ENCODE measurements at regions of chr1 and their contacts with region 1.

Region 1: DNA sequence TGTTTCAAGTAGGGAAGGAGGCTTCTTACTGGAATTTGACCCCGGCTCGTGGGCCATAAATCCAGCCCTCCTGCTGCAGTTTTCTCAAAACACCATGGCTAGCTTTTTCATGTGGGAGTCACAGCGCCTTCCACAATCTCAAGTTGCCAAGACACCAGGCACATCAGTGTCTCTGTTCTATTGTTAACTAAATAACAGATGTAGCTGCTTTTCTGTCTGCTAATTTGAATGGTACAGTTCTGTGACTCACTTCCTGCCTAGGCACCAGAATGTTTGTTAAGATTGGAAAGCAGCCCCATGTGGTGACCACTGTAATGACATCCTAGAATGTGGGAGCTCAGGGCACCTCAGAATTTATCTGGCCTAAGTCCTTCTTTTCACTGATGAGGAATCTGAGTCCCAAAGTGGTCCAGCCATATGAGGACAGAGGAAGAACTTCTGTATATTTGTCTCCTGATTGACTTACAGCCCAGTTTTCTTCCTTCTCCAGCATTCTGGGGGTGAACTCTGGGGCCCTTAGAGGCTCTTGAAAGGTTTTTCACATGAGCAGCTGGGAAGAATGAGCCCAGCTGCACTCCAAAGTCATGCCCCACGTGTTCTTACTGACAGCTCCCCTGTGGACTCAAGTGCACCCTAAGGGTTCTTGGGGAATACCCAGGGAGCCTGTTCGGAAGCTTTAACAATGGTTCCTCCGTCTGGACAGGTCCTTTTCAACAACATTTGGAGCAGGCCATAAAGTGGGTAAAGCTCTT is 27.5 kb downstream of the TRIM45 start:
- DNase-seq: no peak
- ATAC-seq: peak; percentile 66 to 82 (median 76)
- H3K4me3 ChIP-seq: no peak overlapping the region
- H3K27ac ChIP-seq: peak overlapping the region; percentile 98
- H3K4me1 ChIP-seq: peaks cover 54% of the 10 kb centered on the region
- H3K27me3 ChIP-seq: no peaks in the 10 kb centered on the region
- CTCF ChIP-seq: peak; percentile 39

Region 2: DNA sequence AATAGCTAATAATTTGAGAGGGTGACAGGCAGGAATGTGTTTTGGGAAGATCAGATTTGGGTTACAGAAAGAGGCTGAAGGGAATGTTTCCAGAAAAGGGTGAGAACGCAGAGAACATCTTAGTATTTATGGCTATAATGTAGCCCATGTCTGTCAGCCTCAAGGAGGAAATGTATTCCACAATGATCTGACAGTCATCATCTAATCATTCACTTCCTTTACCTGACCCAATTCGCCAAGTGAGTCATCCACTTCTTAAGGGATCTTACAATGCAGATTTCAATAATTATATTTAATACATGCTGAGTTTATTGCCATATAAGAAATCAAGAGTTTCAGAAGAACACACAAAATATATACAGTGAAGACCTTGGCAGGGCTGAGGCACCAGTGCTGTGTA is 16.7 kb after region 1 on chr1:
- intact Hi-C with region 1: loop called in 1 of 2 experiments (anchors 2 kb)
- DNase-seq: no peak
- ATAC-seq: peak in 1 of 4 donors; percentile 59
- H3K4me3 ChIP-seq: no peak overlapping the region
- H3K27ac ChIP-seq: peak overlapping the region; percentile 54
- H3K4me1 ChIP-seq: peaks cover 3% of the 10 kb centered on the region
- H3K27me3 ChIP-seq: no peaks in the 10 kb centered on the region
- CTCF ChIP-seq: no peak

Region 3: DNA sequence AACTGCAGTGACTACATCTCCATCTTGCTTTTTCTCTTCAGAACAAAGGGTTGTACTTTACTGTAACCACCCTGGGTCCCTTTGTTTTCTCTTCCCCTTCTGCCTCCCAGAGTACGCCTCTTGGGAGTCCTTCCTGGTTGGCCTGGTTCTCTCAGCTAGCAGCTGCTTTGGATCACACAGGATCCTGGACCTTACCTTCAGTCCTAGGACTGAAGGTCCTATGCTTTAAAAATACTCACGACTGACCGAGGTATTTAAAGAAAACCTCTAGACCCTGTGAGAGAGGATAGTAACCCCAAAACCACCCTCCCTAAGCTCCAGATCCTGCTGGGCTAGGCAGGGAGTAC is 22.7 kb after region 1 on chr1:
- intact Hi-C with region 1: loop called (anchors 2 kb)
- DNase-seq: no peak
- ATAC-seq: no peak
- H3K4me3 ChIP-seq: peak overlapping the region; percentile 78
- H3K27ac ChIP-seq: peak overlapping the region; percentile 95
- H3K4me1 ChIP-seq: peaks cover 44% of the 10 kb centered on the region
- H3K27me3 ChIP-seq: no peaks in the 10 kb centered on the region
- CTCF ChIP-seq: no peak

Region 4: DNA sequence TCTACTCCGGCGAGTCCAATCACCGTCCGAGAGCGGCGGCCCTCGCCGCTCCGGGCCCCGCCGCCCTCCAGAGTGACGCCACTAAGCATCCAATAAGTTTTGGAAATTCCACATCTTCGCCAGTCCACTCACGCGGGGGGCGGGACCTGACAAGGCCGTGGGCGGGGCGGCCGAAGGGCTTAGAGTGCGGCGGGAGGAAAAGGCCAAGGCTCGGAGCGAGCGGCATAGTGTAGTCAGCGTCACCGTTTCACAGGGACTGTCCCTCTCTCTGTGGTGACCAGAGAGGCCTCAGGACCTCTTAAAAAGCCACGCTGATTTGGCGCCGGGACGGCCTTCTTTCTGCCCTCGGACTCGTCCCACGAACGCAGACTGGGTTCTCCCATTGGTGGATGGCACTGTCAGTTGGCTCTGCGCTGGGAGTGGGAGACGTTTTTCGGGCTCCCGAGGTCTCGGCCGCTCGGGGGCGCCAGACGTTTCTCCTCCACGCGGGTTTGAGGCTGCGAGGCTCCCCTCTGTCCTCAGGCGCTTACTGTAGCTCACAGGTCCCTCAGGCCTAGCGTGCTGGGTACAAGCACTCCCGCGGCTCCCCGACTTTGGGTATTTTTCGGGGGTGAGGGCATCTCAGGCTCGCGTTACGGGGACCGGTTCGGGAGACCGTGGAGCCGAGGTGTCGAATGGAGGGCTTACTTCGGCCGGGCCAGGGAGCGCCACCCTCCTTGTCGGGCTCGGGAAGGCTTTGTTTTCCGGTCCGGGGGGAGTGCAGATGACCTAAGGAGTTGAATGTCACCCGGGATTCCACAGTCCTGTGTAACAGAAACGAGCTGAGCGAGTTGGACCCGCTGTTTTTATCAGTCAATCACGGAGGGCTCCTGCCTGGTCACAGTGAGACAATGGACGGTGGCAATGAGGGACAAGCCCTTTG is 28.0 kb after region 1 on chr1:
- intact Hi-C with region 1: loop called (anchors 1 to 2 kb)
- DNase-seq: peak; percentile 97 to 98
- ATAC-seq: peak; percentile 90 to 95 (median 92)
- H3K4me3 ChIP-seq: peak overlapping the region; percentile 78
- H3K27ac ChIP-seq: peak overlapping the region; percentile 95
- H3K4me1 ChIP-seq: peaks cover 42% of the 10 kb centered on the region
- H3K27me3 ChIP-seq: no peaks in the 10 kb centered on the region
- CTCF ChIP-seq: peak; percentile 73

Region 5: DNA sequence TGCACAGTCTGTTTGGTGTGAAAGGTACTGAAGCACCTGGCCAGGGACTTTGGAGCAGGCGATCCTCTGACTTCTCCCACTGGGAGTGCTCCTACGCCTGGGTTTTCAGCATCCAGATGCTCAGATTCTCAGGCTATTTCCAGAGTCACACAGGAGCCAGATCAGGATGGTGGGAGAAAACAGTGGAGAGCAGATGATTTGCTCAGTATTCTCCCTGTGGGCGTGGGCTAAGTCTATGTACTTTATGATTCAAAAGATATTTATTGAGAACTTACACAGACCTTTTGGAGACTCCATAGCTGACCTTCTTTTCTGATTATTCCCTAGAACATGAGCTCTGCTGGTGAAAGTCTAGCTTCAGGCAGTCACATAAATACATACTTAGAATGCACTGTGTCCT is 646.5 kb after region 1 on chr1:
- intact Hi-C with region 1: no loop called
- DNase-seq: no peak
- ATAC-seq: no peak
- H3K4me3 ChIP-seq: no peak overlapping the region
- H3K27ac ChIP-seq: no peak overlapping the region
- H3K4me1 ChIP-seq: no peaks in the 10 kb centered on the region
- H3K27me3 ChIP-seq: no peaks in the 10 kb centered on the region
- CTCF ChIP-seq: no peak

Measured in psoas muscle (tissue), 8 donors.